ENCODE measurements at regions of chr16 and their contacts with region 1.

Region 1: GRCh38 chr16:30902029-30902972 is 5.9 kb downstream of the CTF1 start:
- DNase-seq: peak; percentile 91

Region 2: DNA sequence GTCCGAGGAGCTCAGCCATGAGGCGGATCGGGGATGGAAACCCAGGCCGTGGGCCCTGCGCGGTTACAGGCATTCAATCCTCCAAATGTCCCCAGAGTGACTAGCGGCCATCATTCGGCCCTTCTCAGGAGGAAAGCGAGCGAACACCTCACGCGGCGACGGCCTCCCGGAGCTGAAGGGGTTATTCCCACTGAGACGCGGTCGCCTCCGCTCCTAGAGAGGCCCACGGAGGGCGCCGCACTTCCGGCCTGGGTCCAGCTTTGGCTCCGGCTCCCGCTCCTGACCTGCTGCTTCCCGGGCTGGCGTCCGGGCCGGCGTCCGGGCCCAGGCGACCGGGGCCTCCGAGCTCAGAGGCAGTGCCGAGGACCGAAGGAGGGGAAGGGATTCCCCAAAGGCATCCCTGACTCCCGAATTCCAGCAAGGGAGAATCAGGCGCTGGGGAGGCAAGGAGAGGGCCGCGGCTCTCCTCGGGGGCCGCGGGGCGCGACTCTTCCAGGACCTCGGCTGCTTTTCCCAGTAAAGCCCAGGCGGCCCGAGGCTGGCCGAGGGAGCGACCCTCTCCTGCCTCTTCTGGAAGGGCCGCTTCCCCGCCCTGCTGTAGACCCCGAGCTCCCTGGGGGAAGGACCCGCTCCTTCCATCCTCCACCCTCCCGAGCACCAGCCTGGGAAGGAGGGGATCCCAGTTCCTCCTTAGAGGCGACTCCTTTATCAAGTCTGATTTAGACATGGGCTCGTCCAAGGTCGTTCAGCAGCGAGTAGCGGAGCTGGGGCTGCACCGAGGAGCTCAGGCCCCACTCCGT is 96.7 kb before region 1 on chr16:
- CTCF ChIA-PET with region 1: interaction called, 11 read pairs
- POLR2A ChIA-PET with region 1: interaction called, 22 read pairs
- DNase-seq: peak; percentile 95

Region 3: GRCh38 chr16:30914830-30915229 is 12.5 kb after region 1 on chr16:
- CTCF ChIA-PET with region 1: interaction called, 8 read pairs
- POLR2A ChIA-PET with region 1: interaction called, 12 read pairs
- DNase-seq: no peak